ENCODE measurements at regions of chr14 and their contacts with region 1.

Region 1: GRCh38 chr14:58362798-58363412 is 32.8 kb upstream of the TOMM20L start:
- DNase-seq: peak in 1 of 2 experiments; percentile 21
- H3K4me3 ChIP-seq: no peak overlapping the region
- H3K4me3 Mint-ChIP-seq: no peak overlapping the region
- H3K27ac Mint-ChIP-seq: no peak overlapping the region
- H3K4me1 ChIP-seq: no peaks in the 10 kb centered on the region
- H3K4me1 Mint-ChIP-seq: no peaks in the 10 kb centered on the region
- H3K27me3 ChIP-seq: no peaks in the 10 kb centered on the region
- H3K27me3 Mint-ChIP-seq: no peaks in the 10 kb centered on the region
- CTCF ChIP-seq: peak; percentile 38 to 42

Region 2: DNA sequence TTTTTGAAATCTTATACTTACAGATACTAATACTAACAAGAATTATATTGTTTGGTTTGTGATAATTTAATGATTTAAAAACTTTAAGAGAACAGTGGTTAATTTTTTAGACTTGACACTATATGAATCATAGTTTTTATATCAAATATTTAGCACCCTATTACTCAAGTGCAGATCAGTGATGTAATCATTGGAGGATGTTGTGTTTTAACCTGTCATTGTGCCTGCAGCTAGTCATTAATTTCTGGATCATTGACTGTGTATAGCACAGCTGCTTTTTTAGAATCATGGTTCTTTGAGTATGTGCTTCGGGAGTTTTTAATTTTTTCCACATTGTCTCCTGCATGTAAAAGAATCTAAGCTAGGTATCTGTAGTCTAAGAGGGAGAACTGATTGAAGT is 47.3 kb before region 1 on chr14:
- CTCF ChIA-PET with region 1: interaction called, 10 read pairs
- POLR2A ChIA-PET with region 1: no interaction called
- intact Hi-C with region 1: no loop called
- DNase-seq: no peak
- H3K4me3 ChIP-seq: no peak overlapping the region
- H3K4me3 Mint-ChIP-seq: no peak overlapping the region
- H3K27ac Mint-ChIP-seq: no peak overlapping the region
- H3K4me1 ChIP-seq: no peaks in the 10 kb centered on the region
- H3K4me1 Mint-ChIP-seq: no peaks in the 10 kb centered on the region
- H3K27me3 ChIP-seq: no peaks in the 10 kb centered on the region
- H3K27me3 Mint-ChIP-seq: no peaks in the 10 kb centered on the region
- CTCF ChIP-seq: no peak

Region 3: GRCh38 chr14:58772799-58773620 is 410.1 kb after region 1 on chr14:
- CTCF ChIA-PET with region 1: no interaction called
- POLR2A ChIA-PET with region 1: no interaction called
- intact Hi-C with region 1: no loop called
- DNase-seq: peak; percentile 72 to 92
- H3K4me3 ChIP-seq: no peak overlapping the region
- H3K4me3 Mint-ChIP-seq: no peak overlapping the region
- H3K27ac Mint-ChIP-seq: peak overlapping the region; percentile 87
- H3K4me1 ChIP-seq: peaks cover 44% of the 10 kb centered on the region
- H3K4me1 Mint-ChIP-seq: peaks cover 33% of the 10 kb centered on the region
- H3K27me3 ChIP-seq: no peaks in the 10 kb centered on the region
- H3K27me3 Mint-ChIP-seq: no peaks in the 10 kb centered on the region
- CTCF ChIP-seq: peak; percentile 9 to 28